Activated CD4-positive, alpha-beta T cell treated with anti-CD3 and anti-CD28 coated beads, Interleukin-2, amount 10 ng/mL, durations not matched to agents 24 days and 14 days (primary cell): ENCODE measurements at regions of chr12 and their contacts with region 1.

Region 1: DNA sequence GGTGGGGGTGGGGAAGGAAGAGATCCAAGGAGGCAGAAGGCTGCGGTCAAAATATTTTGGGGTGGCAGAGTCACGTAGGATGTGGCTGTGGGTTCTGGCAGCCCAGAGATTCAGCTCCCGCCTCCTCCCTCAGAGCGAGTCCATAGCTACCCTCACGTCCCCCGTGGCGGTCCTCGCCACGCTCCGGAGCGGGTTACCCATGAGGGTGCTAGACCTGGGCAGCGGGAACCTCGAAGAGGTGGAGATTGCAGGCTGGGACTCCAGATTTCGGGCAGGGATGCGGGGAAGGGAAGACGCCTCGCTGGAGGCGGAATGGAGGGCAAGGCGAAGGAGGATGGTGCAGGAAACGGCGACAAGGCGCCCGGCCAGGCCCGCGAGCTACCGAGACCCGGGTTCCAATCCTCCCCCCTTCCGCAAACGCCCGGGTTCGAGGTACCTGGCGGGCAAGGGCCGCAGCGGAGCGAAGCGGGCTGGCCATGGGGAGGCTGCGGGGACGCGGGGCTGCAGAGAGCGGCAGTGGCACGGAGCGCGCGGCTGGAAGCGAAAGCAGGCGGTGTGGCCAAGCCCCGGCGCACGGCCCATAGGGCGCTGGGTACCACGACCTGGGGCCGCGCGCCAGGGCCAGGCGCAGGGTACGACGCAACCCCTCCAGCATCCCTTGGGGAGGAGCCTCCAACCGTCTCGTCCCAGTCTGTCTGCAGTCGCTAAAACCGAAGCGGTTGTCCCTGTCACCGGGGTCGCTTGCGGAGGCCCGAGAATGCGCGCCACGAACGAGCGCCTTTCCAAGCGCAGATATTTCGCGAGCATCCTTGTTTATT is 46.2 kb downstream of the BCAT1 start:
- DNase-seq: peak; percentile 85
- H3K4me3 Mint-ChIP-seq: peak overlapping the region; percentile 98
- H3K27ac Mint-ChIP-seq: peak overlapping the region; percentile 98
- H3K4me1 Mint-ChIP-seq: peaks cover 35% of the 10 kb centered on the region
- H3K27me3 Mint-ChIP-seq: peaks cover 4% of the 10 kb centered on the region

Region 2: GRCh38 chr12:24852420-24852819 is 50.3 kb before region 1 on chr12:
- intact Hi-C with region 1: loop called (anchors 1 kb)
- DNase-seq: no peak
- H3K4me3 Mint-ChIP-seq: no peak overlapping the region
- H3K27ac Mint-ChIP-seq: no peak overlapping the region
- H3K4me1 Mint-ChIP-seq: peaks cover 18% of the 10 kb centered on the region
- H3K27me3 Mint-ChIP-seq: no peaks in the 10 kb centered on the region

Region 3: GRCh38 chr12:24921251-24922038 is 18.7 kb after region 1 on chr12:
- intact Hi-C with region 1: loop called (anchors 1 kb)
- DNase-seq: no peak
- H3K4me3 Mint-ChIP-seq: peak overlapping the region; percentile 49
- H3K27ac Mint-ChIP-seq: peak overlapping the region; percentile 81
- H3K4me1 Mint-ChIP-seq: peaks cover 36% of the 10 kb centered on the region
- H3K27me3 Mint-ChIP-seq: peaks cover 7% of the 10 kb centered on the region

Region 4: DNA sequence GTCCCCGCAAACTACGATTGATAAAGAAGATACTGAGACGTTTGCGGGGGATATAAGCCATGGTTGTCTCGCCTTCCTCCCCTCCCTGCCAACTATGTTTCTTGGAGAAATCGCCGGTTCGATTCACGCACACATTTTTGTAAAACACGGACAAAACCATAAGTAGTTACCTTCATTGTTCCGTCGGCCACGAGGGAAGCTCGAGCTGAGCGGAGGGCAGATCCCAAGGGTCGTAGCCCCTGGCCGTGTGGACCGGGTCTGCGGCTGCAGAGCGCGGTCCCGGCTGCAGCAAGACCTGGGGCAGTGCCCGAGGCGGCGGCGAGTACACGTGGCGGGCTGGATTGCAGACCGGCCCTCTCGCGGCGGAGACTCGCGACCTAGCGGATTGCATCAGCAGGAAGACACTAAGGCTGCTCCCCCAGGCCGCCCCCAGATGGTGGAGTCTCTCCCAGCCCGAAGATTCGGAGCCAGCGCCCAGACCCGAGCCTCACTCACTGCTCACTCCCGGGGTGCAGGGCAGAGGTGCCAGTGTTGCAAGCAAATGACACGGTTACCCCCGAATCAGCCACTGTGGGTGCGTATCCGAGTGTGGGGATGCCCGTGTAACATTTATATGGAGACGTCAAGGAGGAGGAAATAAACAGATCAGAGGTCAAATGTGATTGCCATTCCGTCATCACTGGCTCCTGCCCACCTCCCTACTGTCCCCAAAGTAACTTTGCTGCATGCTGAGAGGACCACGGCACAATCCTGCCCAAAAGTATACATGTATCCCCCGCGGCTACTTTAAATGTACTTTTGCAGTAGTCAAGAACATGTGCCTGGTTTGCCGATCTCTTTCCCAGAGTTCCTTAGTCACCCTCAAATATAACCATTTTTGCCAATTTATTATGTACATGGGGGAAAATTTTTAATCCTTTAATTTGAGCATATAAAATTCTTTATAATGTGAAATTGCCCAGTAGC is 46.3 kb after region 1 on chr12 and contains the start of gene BCAT1:
- intact Hi-C with region 1: loop called (anchors 1 kb)
- DNase-seq: peak; percentile 82
- H3K4me3 Mint-ChIP-seq: peak within 1 kb of the TSS; percentile 92
- H3K27ac Mint-ChIP-seq: peak within 1 kb of the TSS; percentile 93
- H3K4me1 Mint-ChIP-seq: peaks cover 52% of the 10 kb centered on the region
- H3K27me3 Mint-ChIP-seq: peaks cover 8% of the 10 kb centered on the region
- total RNA-seq, gene BCAT1: 49.7 and 51.9 TPM in 2 replicates

Region 5: DNA sequence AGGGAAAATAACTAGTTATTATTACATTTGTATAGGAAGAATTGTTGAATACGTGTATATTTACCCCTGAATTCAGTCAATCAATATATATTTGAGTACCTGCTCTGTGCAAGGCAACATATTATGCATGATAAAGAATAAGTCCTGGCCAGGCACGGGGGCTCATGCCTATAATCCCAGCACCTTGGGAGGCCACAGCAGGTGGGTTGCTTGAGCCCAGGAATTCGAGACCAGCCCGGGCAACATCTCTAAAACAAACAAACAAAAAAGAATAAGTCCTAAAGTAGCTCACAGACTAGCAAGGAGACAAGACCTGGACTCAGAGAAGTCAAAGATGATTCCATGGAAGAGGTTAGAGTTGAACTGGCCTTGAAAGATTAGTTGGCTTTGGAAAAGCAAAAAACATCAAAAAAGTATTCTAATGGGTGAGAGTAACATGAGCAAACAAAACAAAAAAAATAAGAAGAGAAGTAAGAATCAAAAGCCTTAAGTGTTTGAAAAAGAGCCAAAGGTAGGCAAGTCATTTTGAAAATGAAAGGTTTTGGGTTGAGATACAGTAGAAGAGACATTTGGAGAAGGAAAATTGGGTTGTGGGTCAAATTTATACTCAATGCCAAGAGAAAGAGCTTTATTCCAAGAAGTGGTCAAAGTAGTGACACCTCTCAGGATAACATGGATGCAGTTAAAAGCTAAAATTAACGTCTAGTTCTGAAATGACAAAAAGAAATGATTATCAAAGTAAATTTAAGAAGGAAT is 161.3 kb after region 1 on chr12:
- intact Hi-C with region 1: no loop called
- DNase-seq: no peak
- H3K4me3 Mint-ChIP-seq: no peak overlapping the region
- H3K27ac Mint-ChIP-seq: peak overlapping the region; percentile 2
- H3K4me1 Mint-ChIP-seq: peaks cover 41% of the 10 kb centered on the region
- H3K27me3 Mint-ChIP-seq: no peaks in the 10 kb centered on the region